ENCODE measurements at regions of chr17 and their contacts with region 1.

Region 1: GRCh38 chr17:43927060-43927864 is 15.0 kb downstream of the PPY start:
- DNase-seq: peak in 1 of 9 experiments; percentile 32
- ATAC-seq: peak; percentile 63
- H3K4me3 ChIP-seq: peak overlapping the region; percentile 21 to 65
- H3K4me3 Mint-ChIP-seq: peak overlapping the region; percentile 86
- H3K27ac ChIP-seq: peak overlapping the region in 1 of 2 experiments; percentile 35
- H3K27ac Mint-ChIP-seq: peak overlapping the region; percentile 88
- H3K4me1 ChIP-seq: peaks cover 23% of the 10 kb centered on the region
- H3K4me1 Mint-ChIP-seq: peaks cover 26% of the 10 kb centered on the region
- H3K27me3 ChIP-seq: peaks cover 0 to 3% of the 10 kb centered on the region in 2 experiments
- H3K27me3 Mint-ChIP-seq: no peaks in the 10 kb centered on the region
- CTCF ChIP-seq: no peak

Region 2: GRCh38 chr17:43946069-43946696 is 18.9 kb after region 1 on chr17:
- CTCF ChIA-PET with region 1: interaction called, 16 read pairs
- POLR2A ChIA-PET with region 1: no interaction called
- intact Hi-C with region 1: no loop called
- DNase-seq: no peak
- ATAC-seq: no peak
- H3K4me3 ChIP-seq: no peak overlapping the region
- H3K4me3 Mint-ChIP-seq: no peak overlapping the region
- H3K27ac ChIP-seq: no peak overlapping the region
- H3K27ac Mint-ChIP-seq: no peak overlapping the region
- H3K4me1 ChIP-seq: no peaks in the 10 kb centered on the region
- H3K4me1 Mint-ChIP-seq: no peaks in the 10 kb centered on the region
- H3K27me3 ChIP-seq: peaks cover 0 to under 1% of the 10 kb centered on the region in 2 experiments
- H3K27me3 Mint-ChIP-seq: peaks cover 17% of the 10 kb centered on the region
- CTCF ChIP-seq: no peak